ENCODE measurements at regions of chr19 and their contacts with region 1.

Region 1: DNA sequence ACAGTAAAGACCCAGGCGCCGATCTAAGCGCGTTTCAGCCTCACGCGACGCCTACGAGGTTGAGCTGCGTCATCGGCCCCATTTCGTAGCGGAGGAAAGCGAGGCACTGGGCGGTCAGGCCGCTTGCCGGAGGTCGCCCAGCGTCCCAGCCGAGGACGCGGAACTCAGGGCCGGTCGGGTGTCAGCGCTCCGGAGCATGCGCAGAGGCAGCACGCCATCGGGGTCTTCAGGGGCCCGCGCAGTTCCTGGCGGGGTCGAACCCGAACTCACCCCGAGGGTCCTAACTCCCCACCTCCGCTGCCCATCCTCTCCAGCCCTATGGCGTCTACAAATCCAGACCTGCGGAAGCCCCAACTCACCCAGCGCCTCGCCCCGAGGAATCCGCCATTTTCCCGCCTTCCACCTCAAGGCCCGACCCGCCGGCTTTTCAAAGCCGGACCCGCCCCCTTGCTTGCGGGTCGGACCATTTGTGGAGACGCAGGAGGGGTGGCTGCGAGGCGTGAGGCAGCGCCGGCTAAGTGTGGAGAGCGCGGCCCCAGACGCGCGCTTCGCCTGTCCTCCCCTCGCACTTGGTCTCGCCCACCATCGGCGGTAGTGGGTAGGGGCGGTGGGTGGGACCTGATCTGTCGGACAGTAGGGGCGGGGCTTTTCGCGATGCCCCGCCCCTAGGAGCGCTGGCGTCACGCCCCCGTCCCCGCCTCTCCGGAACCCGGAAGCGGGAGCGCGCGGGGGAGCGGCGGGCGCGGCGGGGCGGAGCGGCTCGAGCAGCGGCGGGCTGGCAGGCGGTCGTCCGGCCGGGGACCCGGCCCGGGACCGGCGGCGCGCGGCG is at the starts of genes HAUS8 and MYO9B:
- DNase-seq: peak; percentile 100
- H3K4me3 Mint-ChIP-seq: peak within 1 kb of the TSS; percentile 100
- H3K27ac Mint-ChIP-seq: peak within 1 kb of the TSS; percentile 98
- H3K4me1 Mint-ChIP-seq: peaks cover 55% of the 10 kb centered on the region
- H3K27me3 Mint-ChIP-seq: no peaks in the 10 kb centered on the region
- total RNA-seq, gene HAUS8: 47.3 to 48.8 TPM
- total RNA-seq, gene MYO9B: 73.1 to 78.6 TPM

Region 2: GRCh38 chr19:16584248-16585141 is 490.8 kb before region 1 on chr19:
- CTCF ChIA-PET with region 1: no interaction called
- intact Hi-C with region 1: loop called (anchors 5 kb)
- DNase-seq: peak; percentile 96
- H3K4me3 Mint-ChIP-seq: peak overlapping the region; percentile 79
- H3K27ac Mint-ChIP-seq: peak overlapping the region; percentile 82
- H3K4me1 Mint-ChIP-seq: peaks cover 79% of the 10 kb centered on the region
- H3K27me3 Mint-ChIP-seq: no peaks in the 10 kb centered on the region

Region 3: GRCh38 chr19:16998635-16999194 is 76.5 kb before region 1 on chr19:
- CTCF ChIA-PET with region 1: no interaction called
- intact Hi-C with region 1: no loop called
- DNase-seq: no peak
- H3K4me3 Mint-ChIP-seq: no peak overlapping the region
- H3K27ac Mint-ChIP-seq: no peak overlapping the region
- H3K4me1 Mint-ChIP-seq: peaks cover 23% of the 10 kb centered on the region
- H3K27me3 Mint-ChIP-seq: no peaks in the 10 kb centered on the region

Region 4: DNA sequence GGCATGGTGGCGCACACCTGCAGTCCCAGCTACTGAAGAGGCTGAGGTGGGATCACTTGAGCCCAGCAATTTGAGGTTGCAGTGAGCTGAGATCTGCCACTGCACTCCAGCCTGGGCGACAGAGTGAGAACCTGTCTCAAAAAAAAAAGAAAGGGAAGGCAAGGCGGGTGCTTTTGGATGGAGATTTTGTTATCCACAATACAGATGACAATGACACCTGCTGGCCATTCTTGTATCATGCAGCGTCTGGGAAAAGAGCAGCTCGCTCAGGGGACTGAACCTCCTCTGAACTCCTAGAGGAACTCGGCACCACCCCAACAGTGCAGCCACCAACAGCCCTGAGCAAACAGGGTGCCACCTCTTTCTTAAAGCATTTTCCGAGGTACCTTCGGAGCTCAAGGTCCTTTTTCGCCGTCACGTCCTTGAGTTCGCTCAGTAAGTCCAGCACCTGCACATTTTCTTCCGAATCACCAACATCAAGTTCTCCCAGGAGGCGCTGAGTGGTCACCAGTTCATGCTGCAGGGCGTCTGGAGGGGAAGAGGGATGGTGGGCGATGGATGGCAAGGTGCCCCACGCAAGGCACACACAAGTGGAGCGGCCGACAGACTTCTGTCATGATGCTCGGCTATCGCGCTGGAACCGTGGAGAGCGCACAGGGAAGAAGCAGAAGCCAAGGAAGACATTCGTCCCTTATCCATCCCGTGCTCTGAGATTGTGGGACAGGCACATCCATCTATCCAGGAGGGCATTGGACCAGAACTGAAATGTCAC is 22.6 kb before region 1 on chr19:
- CTCF ChIA-PET with region 1: no interaction called
- intact Hi-C with region 1: no loop called
- DNase-seq: peak; percentile 45
- H3K4me3 Mint-ChIP-seq: no peak overlapping the region
- H3K27ac Mint-ChIP-seq: no peak overlapping the region
- H3K4me1 Mint-ChIP-seq: no peaks in the 10 kb centered on the region
- H3K27me3 Mint-ChIP-seq: no peaks in the 10 kb centered on the region

Region 5: GRCh38 chr19:17135001-17135853 is 60.0 kb after region 1 on chr19:
- CTCF ChIA-PET with region 1: no interaction called
- intact Hi-C with region 1: loop called (anchors 2 kb)
- DNase-seq: peak; percentile 67
- H3K4me3 Mint-ChIP-seq: peak overlapping the region; percentile 32
- H3K27ac Mint-ChIP-seq: no peak overlapping the region
- H3K4me1 Mint-ChIP-seq: peaks cover 17% of the 10 kb centered on the region
- H3K27me3 Mint-ChIP-seq: no peaks in the 10 kb centered on the region

Region 6: DNA sequence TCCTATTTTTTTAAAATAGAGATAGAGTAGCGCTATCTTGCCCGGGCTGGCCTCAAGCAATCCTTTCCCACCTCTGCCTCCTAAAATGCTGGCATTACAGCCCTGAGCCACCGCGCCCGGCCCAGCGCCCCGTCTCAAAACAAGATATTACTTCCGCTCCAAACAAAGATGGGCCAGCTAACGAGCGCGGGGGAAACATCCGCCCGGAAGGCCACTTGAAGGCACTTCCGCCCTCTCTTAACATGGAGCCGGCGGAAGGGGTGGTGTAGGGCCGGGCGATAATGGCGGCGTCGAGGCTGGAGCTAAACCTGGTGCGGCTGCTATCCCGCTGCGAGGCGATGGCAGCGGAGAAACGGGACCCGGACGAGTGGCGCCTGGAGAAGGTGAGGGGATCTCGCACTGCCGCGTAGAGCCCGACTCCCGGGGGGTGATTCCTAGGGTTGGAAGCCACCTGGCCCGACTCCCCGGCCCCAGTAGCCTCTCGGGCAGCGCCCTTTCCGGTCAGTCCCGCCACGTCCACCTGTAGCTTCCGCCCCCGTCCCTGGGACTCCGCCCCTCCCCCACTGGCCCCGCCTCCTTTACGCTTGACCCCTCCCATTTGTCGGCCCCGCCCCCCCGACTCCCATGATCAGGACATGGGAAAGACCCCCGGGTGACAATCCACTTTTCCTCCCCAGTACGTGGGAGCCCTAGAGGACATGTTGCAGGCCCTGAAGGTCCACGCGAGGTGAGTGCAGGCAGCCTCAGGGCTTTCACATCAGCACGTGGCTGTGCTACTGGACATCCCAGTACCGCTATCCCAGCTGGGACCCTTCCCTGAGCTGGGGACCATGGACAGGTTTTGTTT is 140.1 kb after region 1 on chr19 and contains the start of gene USE1:
- CTCF ChIA-PET with region 1: no interaction called
- intact Hi-C with region 1: loop called (anchors 1 kb)
- DNase-seq: peak; percentile 93
- H3K4me3 Mint-ChIP-seq: peak within 1 kb of the TSS; percentile 85
- H3K27ac Mint-ChIP-seq: peak within 1 kb of the TSS; percentile 97
- H3K4me1 Mint-ChIP-seq: peaks cover 10% of the 10 kb centered on the region
- H3K27me3 Mint-ChIP-seq: no peaks in the 10 kb centered on the region
- total RNA-seq, gene USE1: 24.7 to 25.3 TPM

Region 7: GRCh38 chr19:17235618-17236377 is 160.5 kb after region 1 on chr19:
- CTCF ChIA-PET with region 1: no interaction called
- intact Hi-C with region 1: loop called (anchors 2 kb)
- DNase-seq: peak; percentile 79
- H3K4me3 Mint-ChIP-seq: peak overlapping the region; percentile 83
- H3K27ac Mint-ChIP-seq: peak overlapping the region; percentile 68
- H3K4me1 Mint-ChIP-seq: peaks cover 19% of the 10 kb centered on the region
- H3K27me3 Mint-ChIP-seq: no peaks in the 10 kb centered on the region

Region 8: GRCh38 chr19:17336872-17337722 is 261.8 kb after region 1 on chr19 and contains the start of gene GTPBP3:
- CTCF ChIA-PET with region 1: no interaction called
- intact Hi-C with region 1: loop called (anchors 1 kb)
- DNase-seq: peak; percentile 98
- H3K4me3 Mint-ChIP-seq: peak within 1 kb of the TSS; percentile 88
- H3K27ac Mint-ChIP-seq: peak within 1 kb of the TSS; percentile 93
- H3K4me1 Mint-ChIP-seq: peaks cover 28% of the 10 kb centered on the region
- H3K27me3 Mint-ChIP-seq: no peaks in the 10 kb centered on the region
- total RNA-seq, gene GTPBP3: 36.8 to 45.7 TPM

Measured in activated naive CD4-positive, alpha-beta T cell treated with anti-CD3 and anti-CD28 coated beads for 36 hours (primary cell).